ENCODE measurements at regions of chr11 and their contacts with region 1.

Region 1: DNA sequence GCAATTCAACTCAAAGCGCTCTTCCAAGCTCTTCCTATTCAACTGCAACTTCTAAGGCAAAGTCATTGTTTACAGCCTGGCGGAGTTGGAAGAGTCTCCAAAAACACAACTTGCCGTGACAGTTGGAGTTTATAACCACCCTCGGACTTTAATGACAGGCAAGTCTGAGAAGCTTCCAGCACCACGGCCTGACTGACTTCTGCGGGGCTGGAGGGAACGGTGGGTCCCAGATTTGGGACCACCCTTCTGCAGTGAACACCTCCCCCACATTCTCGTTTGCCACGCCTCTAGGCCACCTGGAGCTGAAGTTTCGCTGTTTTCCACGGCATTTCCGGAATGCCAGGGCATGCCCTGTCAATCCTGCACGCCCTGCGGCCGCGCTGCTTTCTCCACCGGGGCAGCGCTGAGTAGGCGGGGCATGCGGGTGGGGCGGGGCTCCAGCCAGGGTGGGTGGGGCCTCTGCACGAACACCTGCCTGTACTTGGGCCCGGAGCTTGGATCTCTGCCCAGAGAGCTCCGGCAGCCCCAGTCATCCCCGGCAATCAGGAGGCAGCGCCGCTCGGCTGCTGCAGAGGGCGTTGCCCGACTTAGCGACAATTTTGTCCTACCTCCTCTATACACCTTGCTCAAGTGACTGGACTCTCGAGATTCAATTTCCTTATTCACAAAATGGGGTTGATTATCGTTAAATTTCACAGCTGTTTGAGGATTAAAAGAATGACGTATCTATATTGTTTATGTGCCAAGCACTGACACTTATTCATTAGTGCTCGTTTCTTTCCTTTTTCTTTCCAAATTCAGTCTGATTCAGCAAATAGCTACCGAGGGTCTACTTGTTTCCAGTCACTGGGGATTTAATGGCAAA is 48.7 kb upstream of the BIRC3 start:
- DNase-seq: peak; percentile 80 to 89 (median 85)
- H3K4me3 ChIP-seq: peak overlapping the region; percentile 28
- H3K27ac ChIP-seq: no peak overlapping the region
- H3K4me1 ChIP-seq: no peaks in the 10 kb centered on the region
- H3K27me3 ChIP-seq: no peaks in the 10 kb centered on the region
- CTCF ChIP-seq: peak; percentile 16 to 54 (median 46)
- EP300 ChIP-seq: no peak
- POLR2A ChIP-seq: peak; percentile 30

Region 2: DNA sequence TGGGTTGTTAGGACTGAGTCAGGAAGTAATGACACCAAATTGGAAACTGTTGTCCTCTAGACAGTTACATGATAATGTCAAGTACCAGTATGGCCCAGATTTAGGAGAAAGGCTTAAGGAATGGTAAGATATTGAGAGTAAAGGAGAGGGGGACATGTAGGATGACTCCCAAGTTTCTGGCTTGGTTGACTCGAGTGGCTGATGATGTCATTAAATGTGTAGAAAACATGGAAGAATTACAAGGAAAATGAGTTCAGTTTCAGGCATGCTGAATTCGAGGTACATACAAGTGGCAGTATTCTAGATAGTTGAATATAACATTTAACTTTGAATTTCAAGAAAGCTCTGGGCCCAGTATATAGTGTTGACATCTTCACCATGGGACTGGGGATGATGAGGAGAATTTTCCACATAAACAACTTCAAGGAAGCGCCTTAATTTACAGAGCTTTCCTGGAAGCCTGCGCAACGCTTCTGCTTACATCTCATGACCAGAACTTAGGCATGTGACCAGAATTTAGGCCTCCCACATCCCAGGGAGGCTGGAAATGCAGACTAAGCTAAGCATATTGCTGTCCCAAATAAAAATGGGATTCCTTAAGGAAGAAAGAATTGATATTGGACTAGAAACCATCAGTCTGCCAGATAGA is 217.5 kb before region 1 on chr11:
- intact Hi-C with region 1: loop called in 1 of 4 experiments (anchors 10 kb)
- DNase-seq: no peak
- H3K4me3 ChIP-seq: no peak overlapping the region
- H3K27ac ChIP-seq: no peak overlapping the region
- H3K4me1 ChIP-seq: peaks cover 2% of the 10 kb centered on the region
- H3K27me3 ChIP-seq: no peaks in the 10 kb centered on the region
- CTCF ChIP-seq: no peak
- EP300 ChIP-seq: no peak
- POLR2A ChIP-seq: no peak

Measured in ovary (tissue), 10 donors.